Natural killer cell (primary cell): ENCODE measurements at regions of chr21 and their contacts with region 1.

Region 1: GRCh38 chr21:37366482-37367316 is at the start of gene DYRK1A:
- DNase-seq: peak; percentile 97 to 100
- ATAC-seq: peak; percentile 75 to 93 (median 82)
- H3K4me3 ChIP-seq: peak within 1 kb of the TSS; percentile 76
- H3K4me3 Mint-ChIP-seq: peak within 1 kb of the TSS; percentile 99
- H3K27ac ChIP-seq: peak within 1 kb of the TSS; percentile 95
- H3K27ac Mint-ChIP-seq: peak within 1 kb of the TSS; percentile 97 to 100
- H3K4me1 ChIP-seq: peaks cover 19% of the 10 kb centered on the region
- H3K4me1 Mint-ChIP-seq: peaks cover 46 to 53% of the 10 kb centered on the region in 2 donors
- H3K27me3 ChIP-seq: no peaks in the 10 kb centered on the region
- H3K27me3 Mint-ChIP-seq: no peaks in the 10 kb centered on the region
- CTCF ChIP-seq: no peak
- total RNA-seq, gene DYRK1A: 149 to 166 (median 153) TPM

Region 2: DNA sequence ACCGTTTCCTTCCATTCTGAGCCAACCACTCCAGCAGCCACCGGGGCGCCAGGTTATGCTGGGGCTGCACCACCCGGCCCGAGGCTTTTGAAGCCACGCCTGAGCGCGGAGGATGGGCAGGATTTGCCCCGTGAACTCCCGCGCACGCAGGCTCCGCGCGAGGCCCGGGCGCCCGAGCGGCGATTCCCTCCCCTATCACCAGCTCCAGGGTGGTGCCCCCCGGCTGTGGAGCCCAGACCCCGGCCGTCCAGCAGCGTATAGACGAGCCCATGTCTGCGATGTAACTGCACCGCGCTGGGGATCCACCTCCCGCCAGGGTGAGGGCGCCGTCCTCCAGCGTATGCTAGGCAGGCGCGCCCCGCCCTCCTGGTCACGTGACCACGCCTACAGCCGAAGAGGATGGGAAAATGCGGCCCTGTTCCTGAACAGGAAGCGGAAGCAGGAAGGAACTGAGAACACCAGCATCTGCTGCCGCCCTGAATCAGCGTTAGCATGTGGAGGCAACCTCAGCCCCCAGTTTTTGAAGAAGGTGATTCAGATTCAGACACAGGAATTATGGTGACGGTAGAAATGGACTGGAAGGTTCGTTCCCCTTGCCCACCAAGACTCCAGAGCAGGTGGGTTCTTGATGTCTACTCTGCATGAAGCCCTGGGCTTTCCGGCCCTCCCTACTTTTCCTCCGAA is 145.6 kb before region 1 on chr21:
- intact Hi-C with region 1: loop called (anchors 2 kb)
- DNase-seq: peak; percentile 85 to 95
- ATAC-seq: peak; percentile 67 to 85 (median 76)
- H3K4me3 ChIP-seq: peak overlapping the region; percentile 69
- H3K4me3 Mint-ChIP-seq: peak overlapping the region; percentile 95
- H3K27ac ChIP-seq: peak overlapping the region; percentile 77
- H3K27ac Mint-ChIP-seq: peak overlapping the region; percentile 89 to 91
- H3K4me1 ChIP-seq: peaks cover 44% of the 10 kb centered on the region
- H3K4me1 Mint-ChIP-seq: peaks cover 51 to 53% of the 10 kb centered on the region in 2 donors
- H3K27me3 ChIP-seq: no peaks in the 10 kb centered on the region
- H3K27me3 Mint-ChIP-seq: no peaks in the 10 kb centered on the region
- CTCF ChIP-seq: no peak

Region 3: DNA sequence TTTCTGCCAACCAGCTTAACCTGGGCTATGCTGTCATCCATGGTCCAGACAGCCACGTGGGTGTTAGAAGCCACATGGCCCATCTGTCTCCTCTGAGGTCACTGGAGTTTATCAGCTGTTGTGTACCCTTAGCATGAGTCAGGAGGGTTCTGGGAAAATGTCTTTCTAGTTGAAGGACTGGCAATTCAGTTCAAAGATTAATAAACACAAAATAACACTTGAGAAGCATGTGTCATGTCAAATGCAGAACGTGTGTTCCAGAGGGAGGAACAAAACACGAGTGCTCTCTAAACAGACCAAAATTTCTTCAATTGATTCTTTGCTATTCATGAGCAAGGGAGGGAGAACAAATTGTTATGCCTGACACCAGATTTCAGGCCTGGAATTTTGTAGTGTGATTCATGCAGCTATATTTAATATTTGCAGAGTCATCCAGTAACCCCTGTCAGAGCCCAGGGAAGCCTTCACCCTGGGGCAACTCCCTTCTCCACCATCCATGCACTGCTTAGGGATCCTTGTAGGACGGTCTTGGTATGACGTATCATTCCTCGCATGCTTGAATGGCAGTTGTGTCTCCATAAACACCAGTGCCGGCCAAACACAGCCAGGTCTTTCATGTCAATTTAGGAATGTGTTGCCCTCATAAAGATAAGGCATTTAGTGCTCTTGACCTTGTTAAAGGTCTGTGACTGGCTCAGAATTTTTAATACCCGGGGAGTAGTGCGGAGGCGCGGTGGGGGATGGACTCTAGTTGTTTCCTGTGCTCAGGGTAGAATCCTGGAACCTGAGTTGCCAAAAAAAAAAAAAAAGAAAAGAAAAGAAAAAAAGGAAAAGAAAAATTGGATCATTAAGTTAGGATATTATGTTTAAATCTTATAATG is 27.8 kb before region 1 on chr21:
- intact Hi-C with region 1: no loop called
- DNase-seq: no peak
- ATAC-seq: peak in 2 of 3 donors; percentile 40 to 62
- H3K4me3 ChIP-seq: no peak overlapping the region
- H3K4me3 Mint-ChIP-seq: no peak overlapping the region
- H3K27ac ChIP-seq: no peak overlapping the region
- H3K27ac Mint-ChIP-seq: no peak overlapping the region
- H3K4me1 ChIP-seq: no peaks in the 10 kb centered on the region
- H3K4me1 Mint-ChIP-seq: no peaks in the 10 kb centered on the region
- H3K27me3 ChIP-seq: no peaks in the 10 kb centered on the region
- H3K27me3 Mint-ChIP-seq: peaks cover 0 to 3% of the 10 kb centered on the region in 2 donors
- CTCF ChIP-seq: no peak

Region 4: GRCh38 chr21:37386151-37386550 is 19.5 kb after region 1 on chr21:
- intact Hi-C with region 1: loop called (anchors 2 kb)
- DNase-seq: no peak
- ATAC-seq: no peak
- H3K4me3 ChIP-seq: no peak overlapping the region
- H3K4me3 Mint-ChIP-seq: no peak overlapping the region
- H3K27ac ChIP-seq: no peak overlapping the region
- H3K27ac Mint-ChIP-seq: peak overlapping the region; percentile 59 to 69
- H3K4me1 ChIP-seq: peaks cover 37% of the 10 kb centered on the region
- H3K4me1 Mint-ChIP-seq: peaks cover 80 to 81% of the 10 kb centered on the region in 2 donors
- H3K27me3 ChIP-seq: no peaks in the 10 kb centered on the region
- H3K27me3 Mint-ChIP-seq: no peaks in the 10 kb centered on the region
- CTCF ChIP-seq: no peak

Region 5: DNA sequence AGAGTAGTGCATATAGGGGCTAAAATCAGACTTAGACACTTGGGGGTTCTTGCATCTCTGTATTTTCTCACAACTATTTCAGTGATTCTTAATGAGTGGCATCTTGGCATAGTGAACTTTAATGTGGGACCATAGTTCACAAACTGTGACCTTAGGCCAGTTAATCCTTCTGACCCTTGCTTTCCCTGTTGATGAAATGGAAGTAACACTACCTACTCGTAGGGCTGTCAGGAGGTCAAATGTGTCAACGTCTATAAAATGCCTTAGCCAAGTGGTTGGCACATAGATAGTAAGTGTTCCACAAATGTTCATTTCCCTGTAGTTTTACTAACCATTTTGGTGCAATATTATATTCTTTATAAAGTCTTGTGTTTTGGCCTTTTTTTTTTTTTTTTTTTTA is 49.2 kb after region 1 on chr21:
- intact Hi-C with region 1: no loop called
- DNase-seq: no peak
- ATAC-seq: peak; percentile 55 to 63 (median 60)
- H3K4me3 ChIP-seq: no peak overlapping the region
- H3K4me3 Mint-ChIP-seq: peak overlapping the region; percentile 5
- H3K27ac ChIP-seq: peak overlapping the region; percentile 57
- H3K27ac Mint-ChIP-seq: peak overlapping the region; percentile 73 to 81
- H3K4me1 ChIP-seq: peaks cover 19% of the 10 kb centered on the region
- H3K4me1 Mint-ChIP-seq: peaks cover 82 to 85% of the 10 kb centered on the region in 2 donors
- H3K27me3 ChIP-seq: no peaks in the 10 kb centered on the region
- H3K27me3 Mint-ChIP-seq: no peaks in the 10 kb centered on the region
- CTCF ChIP-seq: no peak

Region 6: DNA sequence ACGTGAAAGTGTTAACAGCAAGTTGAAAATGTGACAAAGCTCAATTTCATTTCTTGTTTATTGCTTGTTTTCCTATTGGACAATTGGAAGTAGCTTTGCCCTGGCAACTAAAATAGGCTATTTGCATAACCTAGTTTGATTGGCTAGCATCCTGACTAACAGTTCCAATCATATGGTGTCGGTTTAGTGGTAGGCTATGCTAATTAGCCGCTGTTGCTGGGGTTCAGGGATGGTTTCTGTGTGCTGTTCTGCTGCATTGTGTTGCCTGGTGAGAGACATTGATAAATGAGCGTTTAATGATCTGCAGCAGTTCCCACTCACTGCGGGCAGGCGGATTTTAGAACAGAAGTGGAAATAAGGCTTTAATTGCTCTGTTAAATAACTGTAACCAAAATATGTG is 68.4 kb after region 1 on chr21:
- intact Hi-C with region 1: loop called (anchors 2 kb)
- DNase-seq: peak; percentile 48 to 85
- ATAC-seq: peak; percentile 97 to 98 (median 98)
- H3K4me3 ChIP-seq: no peak overlapping the region
- H3K4me3 Mint-ChIP-seq: no peak overlapping the region
- H3K27ac ChIP-seq: peak overlapping the region; percentile 13
- H3K27ac Mint-ChIP-seq: no peak overlapping the region
- H3K4me1 ChIP-seq: peaks cover 12% of the 10 kb centered on the region
- H3K4me1 Mint-ChIP-seq: peaks cover 35 to 53% of the 10 kb centered on the region in 2 donors
- H3K27me3 ChIP-seq: no peaks in the 10 kb centered on the region
- H3K27me3 Mint-ChIP-seq: no peaks in the 10 kb centered on the region
- CTCF ChIP-seq: no peak

Region 7: GRCh38 chr21:37563641-37564340 is 197.1 kb after region 1 on chr21:
- intact Hi-C with region 1: loop called (anchors 5 kb)
- DNase-seq: peak; percentile 92 to 97
- ATAC-seq: peak; percentile 73 to 94 (median 87)
- H3K4me3 ChIP-seq: peak overlapping the region; percentile 87
- H3K4me3 Mint-ChIP-seq: peak overlapping the region; percentile 97
- H3K27ac ChIP-seq: peak overlapping the region; percentile 95
- H3K27ac Mint-ChIP-seq: peak overlapping the region; percentile 98 to 100
- H3K4me1 ChIP-seq: peaks cover 15% of the 10 kb centered on the region
- H3K4me1 Mint-ChIP-seq: peaks cover 18 to 28% of the 10 kb centered on the region in 2 donors
- H3K27me3 ChIP-seq: no peaks in the 10 kb centered on the region
- H3K27me3 Mint-ChIP-seq: peaks cover 0 to 3% of the 10 kb centered on the region in 2 donors
- CTCF ChIP-seq: peak; percentile 37